ENCODE measurements at regions of chr5 and their contacts with region 1.

Region 1: GRCh38 chr5:102583276-102584124 is 84.7 kb upstream of the SLCO6A1 start:
- DNase-seq: no peak
- H3K4me3 Mint-ChIP-seq: no peak overlapping the region
- H3K27ac Mint-ChIP-seq: no peak overlapping the region
- H3K4me1 Mint-ChIP-seq: no peaks in the 10 kb centered on the region
- H3K27me3 Mint-ChIP-seq: peaks cover 10% of the 10 kb centered on the region

Region 2: DNA sequence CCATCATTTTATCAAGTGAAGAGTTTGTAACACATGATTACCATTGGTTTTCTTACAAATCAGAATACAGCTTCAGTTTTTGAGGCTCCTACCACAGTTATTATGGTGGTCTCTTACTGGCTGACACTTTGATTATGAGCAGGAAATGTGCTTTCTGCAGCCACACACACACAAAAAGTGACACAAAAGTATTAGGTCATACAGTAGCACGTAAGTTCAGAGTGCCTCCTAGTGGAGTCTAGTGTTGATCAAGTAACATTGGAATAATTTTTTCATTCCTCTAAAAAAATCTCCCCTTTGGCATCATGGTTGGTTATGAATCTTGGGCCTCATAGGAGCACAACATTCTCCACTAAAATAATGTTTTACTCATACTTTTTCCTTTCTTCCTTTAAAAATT is 209.2 kb after region 1 on chr5:
- intact Hi-C with region 1: loop called (anchors 5 kb)
- DNase-seq: no peak
- H3K4me3 Mint-ChIP-seq: no peak overlapping the region
- H3K27ac Mint-ChIP-seq: no peak overlapping the region
- H3K4me1 Mint-ChIP-seq: peaks cover 15% of the 10 kb centered on the region
- H3K27me3 Mint-ChIP-seq: no peaks in the 10 kb centered on the region

Region 3: DNA sequence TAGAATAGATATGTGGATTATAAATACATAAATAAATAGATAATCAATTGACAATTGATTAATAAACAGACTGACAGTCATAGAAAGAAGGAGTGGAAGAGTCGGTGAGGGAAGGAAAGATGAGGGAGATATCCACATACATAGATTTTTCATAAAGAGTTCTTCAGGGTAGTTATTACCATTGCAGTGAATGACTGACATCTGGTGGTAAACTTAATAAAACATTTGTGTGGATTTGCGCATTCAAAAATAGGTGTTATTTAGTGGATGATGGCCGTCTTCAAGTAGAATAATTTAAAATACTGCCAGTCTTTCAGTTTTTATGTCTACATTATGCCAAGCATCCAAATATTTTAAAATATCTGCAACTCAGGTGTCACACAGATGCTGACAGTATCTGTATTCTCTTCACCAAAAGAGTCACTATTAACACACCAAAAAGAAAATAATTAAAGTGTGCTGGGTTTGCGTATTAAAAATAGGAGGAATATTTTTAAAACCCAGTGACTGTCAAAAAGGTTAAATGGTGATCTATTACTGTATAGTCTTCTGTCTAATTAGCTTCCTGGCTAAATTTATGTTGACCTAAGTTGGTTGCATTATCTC is 457.7 kb after region 1 on chr5:
- intact Hi-C with region 1: loop called (anchors 1 kb)
- DNase-seq: no peak
- H3K4me3 Mint-ChIP-seq: no peak overlapping the region
- H3K27ac Mint-ChIP-seq: no peak overlapping the region
- H3K4me1 Mint-ChIP-seq: no peaks in the 10 kb centered on the region
- H3K27me3 Mint-ChIP-seq: peaks cover 25% of the 10 kb centered on the region

Region 4: DNA sequence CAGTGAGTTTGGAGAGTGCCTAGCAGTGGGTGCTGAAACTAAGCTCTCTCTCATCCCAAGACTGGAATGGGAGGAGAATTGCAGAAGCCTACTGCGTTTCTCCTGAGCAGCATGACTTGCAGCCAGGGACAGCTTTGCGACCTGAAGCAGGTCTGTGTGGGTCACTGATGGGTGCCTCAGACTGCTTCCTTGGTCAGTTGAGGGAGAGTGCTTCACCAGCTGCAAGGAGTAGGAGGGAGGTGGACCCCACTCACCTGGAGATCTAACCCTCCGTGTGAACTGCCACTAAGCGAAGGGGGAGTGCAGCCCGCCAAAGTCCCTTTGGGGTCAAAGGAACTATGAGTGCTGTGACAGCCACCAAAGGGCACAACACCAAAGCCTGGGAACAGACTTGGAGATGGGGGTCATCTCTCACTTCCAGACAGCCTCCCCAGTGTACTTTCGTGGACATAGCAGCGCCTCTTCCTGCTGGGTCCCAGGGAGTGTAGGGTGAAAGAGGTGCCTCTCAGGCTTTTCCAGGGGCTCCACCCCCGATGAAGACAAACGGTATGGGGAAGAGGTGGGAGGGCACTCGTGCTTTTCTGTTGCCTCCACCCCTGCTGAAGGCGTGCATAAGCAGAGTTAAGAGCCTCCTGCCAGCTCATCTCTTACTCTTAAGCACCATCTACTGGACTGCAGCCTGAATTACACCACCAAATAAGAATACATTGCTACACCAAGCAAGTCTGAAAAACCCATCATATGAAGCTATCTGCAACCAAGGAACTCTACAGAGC is 640.8 kb after region 1 on chr5:
- intact Hi-C with region 1: loop called (anchors 10 kb)
- DNase-seq: peak; percentile 87
- H3K4me3 Mint-ChIP-seq: no peak overlapping the region
- H3K27ac Mint-ChIP-seq: no peak overlapping the region
- H3K4me1 Mint-ChIP-seq: peaks cover 2% of the 10 kb centered on the region
- H3K27me3 Mint-ChIP-seq: peaks cover 38% of the 10 kb centered on the region

Measured in activated CD4-positive, alpha-beta T cell treated with anti-CD3 and anti-CD28 coated beads, Interleukin-2, amount 10 ng/mL, durations not matched to agents 24 days and 14 days (primary cell).